Activated CD4-positive, alpha-beta T cell treated with anti-CD3 and anti-CD28 coated beads for 36 hours (primary cell): ENCODE measurements at regions of chr2 and their contacts with region 1.

Region 1: GRCh38 chr2:134253804-134254203 is at the start of gene MGAT5:
- DNase-seq: no peak
- ATAC-seq: no peak
- H3K4me3 Mint-ChIP-seq: no peak within 1 kb of the TSS
- H3K27ac Mint-ChIP-seq: no peak within 1 kb of the TSS
- H3K4me1 Mint-ChIP-seq: peaks cover 90% of the 10 kb centered on the region
- H3K27me3 Mint-ChIP-seq: peaks cover 4% of the 10 kb centered on the region
- total RNA-seq, gene MGAT5: 22.2 to 25.7 TPM

Region 2: DNA sequence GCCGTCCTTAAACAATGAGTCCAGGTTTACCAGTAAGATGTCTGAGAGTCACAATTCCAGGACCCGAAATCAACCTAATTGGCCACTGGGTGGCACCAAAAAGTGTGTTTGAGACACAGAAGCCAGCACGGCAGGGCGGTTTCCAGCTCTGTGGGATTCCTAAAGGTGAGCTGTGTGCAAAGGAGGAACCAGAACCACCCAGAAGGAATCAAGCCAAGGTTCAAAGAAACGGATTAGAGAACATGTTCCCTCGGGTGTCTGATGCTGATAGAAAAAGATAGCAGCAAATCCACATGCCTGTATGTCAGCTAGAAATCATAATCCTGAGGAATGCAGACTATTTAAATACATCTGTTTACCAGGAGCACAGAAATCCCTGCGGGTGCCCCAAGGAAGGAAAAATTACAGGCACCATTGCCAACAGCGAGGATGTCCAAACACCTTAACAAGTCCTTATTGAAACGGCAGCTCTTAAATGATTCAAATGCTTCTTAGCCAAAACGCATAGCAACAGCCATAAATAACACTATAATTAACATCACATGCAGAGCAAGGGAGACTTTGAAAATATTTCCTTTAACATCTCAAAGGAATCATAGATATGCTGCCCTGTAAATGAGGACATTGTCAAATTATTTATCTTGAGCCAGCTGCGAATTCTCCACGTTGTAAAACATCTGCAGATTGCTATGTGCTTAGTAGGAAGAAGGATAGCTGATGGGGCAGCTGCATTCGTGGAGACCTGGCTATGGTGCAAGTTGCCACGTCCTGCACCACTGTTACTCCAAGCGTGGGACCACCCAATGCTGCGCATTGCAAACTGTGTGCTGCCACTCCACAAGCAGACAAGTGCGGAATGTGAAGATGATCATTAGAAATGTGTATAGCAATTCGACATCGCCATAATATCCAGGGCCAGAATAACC is 366.8 kb before region 1 on chr2:
- CTCF ChIA-PET with region 1: no interaction called
- POLR2A ChIA-PET with region 1: no interaction called
- intact Hi-C with region 1: loop called in 1 of 2 experiments (anchors 5 kb)
- DNase-seq: peak; percentile 69
- ATAC-seq: peak; percentile 39
- H3K4me3 Mint-ChIP-seq: no peak overlapping the region
- H3K27ac Mint-ChIP-seq: no peak overlapping the region
- H3K4me1 Mint-ChIP-seq: no peaks in the 10 kb centered on the region
- H3K27me3 Mint-ChIP-seq: peaks cover 12% of the 10 kb centered on the region

Region 3: GRCh38 chr2:134218930-134219658 is 34.7 kb before region 1 on chr2:
- CTCF ChIA-PET with region 1: interaction called, 13 read pairs
- POLR2A ChIA-PET with region 1: interaction called, 4 read pairs
- intact Hi-C with region 1: loop called (anchors 1 to 5 kb)
- DNase-seq: peak; percentile 61
- ATAC-seq: no peak
- H3K4me3 Mint-ChIP-seq: peak overlapping the region; percentile 22
- H3K27ac Mint-ChIP-seq: peak overlapping the region; percentile 79
- H3K4me1 Mint-ChIP-seq: peaks cover 68% of the 10 kb centered on the region
- H3K27me3 Mint-ChIP-seq: no peaks in the 10 kb centered on the region

Region 4: GRCh38 chr2:134282629-134283400 is 29.0 kb after region 1 on chr2:
- CTCF ChIA-PET with region 1: interaction called, 3 read pairs
- POLR2A ChIA-PET with region 1: no interaction called
- intact Hi-C with region 1: loop called (anchors 1 to 2 kb)
- DNase-seq: peak; percentile 70
- ATAC-seq: peak; percentile 91
- H3K4me3 Mint-ChIP-seq: no peak overlapping the region
- H3K27ac Mint-ChIP-seq: peak overlapping the region; percentile 66
- H3K4me1 Mint-ChIP-seq: peaks cover 51% of the 10 kb centered on the region
- H3K27me3 Mint-ChIP-seq: no peaks in the 10 kb centered on the region

Region 5: DNA sequence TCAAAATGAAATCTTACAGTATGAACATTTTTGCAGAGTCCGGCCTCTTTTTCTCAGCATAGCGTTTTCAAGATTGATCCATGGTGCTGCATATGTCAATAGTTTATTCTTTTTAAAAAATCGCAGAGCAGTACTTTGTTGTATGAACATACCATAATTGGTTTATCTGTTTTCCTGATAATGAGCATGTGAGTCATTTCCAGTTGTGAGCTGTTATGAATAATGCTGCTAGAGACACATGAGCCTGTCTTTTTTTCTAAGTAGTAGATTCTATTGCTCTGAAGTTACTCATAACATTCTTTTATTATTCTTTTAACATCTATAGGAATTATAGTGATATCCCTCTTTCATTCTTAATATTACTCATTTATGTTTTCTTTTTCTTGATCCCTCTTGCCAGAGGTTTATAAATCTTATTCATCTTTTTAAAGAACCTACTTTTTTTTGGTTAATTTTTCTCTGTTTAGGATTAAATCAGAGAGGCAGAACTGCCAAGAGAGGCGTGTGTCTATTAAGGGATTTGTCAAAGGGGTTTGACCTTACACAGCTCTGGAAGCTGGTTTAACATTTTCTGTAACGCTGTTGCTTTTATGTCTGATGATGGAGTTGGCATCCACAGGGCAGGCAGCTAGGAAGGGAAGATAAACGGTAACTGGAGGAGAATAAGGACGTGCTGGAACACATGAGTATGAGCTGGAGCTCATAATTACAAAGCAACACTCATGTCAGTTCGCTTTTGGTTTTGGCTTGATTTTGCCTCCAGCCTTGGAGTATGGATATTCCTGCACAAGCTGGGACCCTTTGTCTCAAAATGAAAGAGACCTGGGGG is 47.5 kb after region 1 on chr2:
- CTCF ChIA-PET with region 1: no interaction called
- POLR2A ChIA-PET with region 1: no interaction called
- intact Hi-C with region 1: loop called (anchors 1 to 2 kb)
- DNase-seq: no peak
- ATAC-seq: peak; percentile 88
- H3K4me3 Mint-ChIP-seq: peak overlapping the region; percentile 8
- H3K27ac Mint-ChIP-seq: peak overlapping the region; percentile 51
- H3K4me1 Mint-ChIP-seq: peaks cover 59% of the 10 kb centered on the region
- H3K27me3 Mint-ChIP-seq: no peaks in the 10 kb centered on the region